ENCODE measurements at regions of chr21 and their contacts with region 1.

Region 1: DNA sequence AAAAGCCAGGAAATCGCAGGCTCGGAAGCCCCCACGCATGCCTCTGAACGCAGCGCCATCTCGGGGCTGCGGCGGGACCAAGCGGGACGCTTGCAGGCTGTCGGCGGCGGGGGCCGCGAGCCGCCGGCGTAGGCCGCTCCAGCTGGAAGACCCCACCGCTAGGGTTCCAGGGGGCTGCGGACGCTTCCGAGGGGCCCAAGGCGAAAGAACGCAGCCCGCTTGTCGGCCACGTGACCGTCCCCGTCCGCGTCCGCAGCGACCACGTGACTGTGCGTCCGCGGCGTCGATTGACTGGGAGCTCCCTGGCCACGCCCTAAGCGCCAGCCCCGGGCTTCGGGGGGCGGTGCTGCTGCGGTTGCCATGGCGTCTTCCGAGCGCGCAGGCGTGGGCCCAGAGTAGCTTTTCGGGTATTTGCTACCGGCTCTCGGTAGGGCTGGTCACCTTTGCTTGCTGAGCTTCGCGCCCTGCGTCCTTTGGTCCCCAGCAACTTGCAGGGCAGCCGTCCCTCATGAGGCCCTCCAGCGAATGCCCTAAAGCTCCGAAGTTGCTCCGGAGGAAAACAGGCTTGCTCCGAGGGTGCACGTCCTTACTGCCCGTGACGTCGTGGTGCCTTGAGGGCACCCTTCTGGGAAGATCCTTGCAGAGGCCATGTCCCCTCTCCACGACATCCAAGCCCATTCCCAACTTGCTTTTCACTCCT is 197.2 kb downstream of the DYRK1A start:
- DNase-seq: peak; percentile 86 to 94 (median 91)
- ATAC-seq: peak; percentile 93
- H3K4me3 ChIP-seq: peak overlapping the region; percentile 99
- H3K4me3 Mint-ChIP-seq: peak overlapping the region; percentile 93 to 100 (median 97)
- H3K27ac ChIP-seq: peak overlapping the region; percentile 82
- H3K27ac Mint-ChIP-seq: peak overlapping the region; percentile 97 to 100 (median 99)
- H3K4me1 ChIP-seq: peaks cover 11 to 17% of the 10 kb centered on the region in 2 donors
- H3K4me1 Mint-ChIP-seq: peaks cover 0 to 32% (median 17%) of the 10 kb centered on the region in 7 donors
- H3K27me3 ChIP-seq: no peaks in the 10 kb centered on the region
- H3K27me3 Mint-ChIP-seq: peaks cover 0 to 8% (median 2%) of the 10 kb centered on the region in 5 donors

Region 2: GRCh38 chr21:36156339-36156814 is 1407.4 kb before region 1 on chr21:
- CTCF ChIA-PET with region 1: no interaction called
- POLR2A ChIA-PET with region 1: no interaction called
- intact Hi-C with region 1: loop called in 1 of 2 experiments (anchors 5 kb)
- DNase-seq: peak; percentile 99 to 100 (median 100)
- ATAC-seq: peak; percentile 94
- H3K4me3 ChIP-seq: peak overlapping the region; percentile 81
- H3K4me3 Mint-ChIP-seq: peak overlapping the region; percentile 71 to 91 (median 86)
- H3K27ac ChIP-seq: peak overlapping the region; percentile 81
- H3K27ac Mint-ChIP-seq: peak overlapping the region in 8 of 9 donors; percentile 46 to 88 (median 58)
- H3K4me1 ChIP-seq: peaks cover 11% of the 10 kb centered on the region in 2 donors
- H3K4me1 Mint-ChIP-seq: peaks cover 11 to 45% (median 33%) of the 10 kb centered on the region in 7 donors
- H3K27me3 ChIP-seq: no peaks in the 10 kb centered on the region
- H3K27me3 Mint-ChIP-seq: peaks cover 0 to 13% (median 0%) of the 10 kb centered on the region in 5 donors

Region 3: GRCh38 chr21:37220981-37221664 is 342.7 kb before region 1 on chr21:
- CTCF ChIA-PET with region 1: interaction called, 5 read pairs
- POLR2A ChIA-PET with region 1: interaction called, 6 read pairs
- intact Hi-C with region 1: loop called in 1 of 2 experiments (anchors 1 kb)
- DNase-seq: peak; percentile 76 to 95 (median 88)
- ATAC-seq: peak; percentile 90
- H3K4me3 ChIP-seq: peak overlapping the region; percentile 83
- H3K4me3 Mint-ChIP-seq: peak overlapping the region; percentile 85 to 95 (median 92)
- H3K27ac ChIP-seq: peak overlapping the region; percentile 81
- H3K27ac Mint-ChIP-seq: peak overlapping the region; percentile 85 to 95 (median 91)
- H3K4me1 ChIP-seq: peaks cover 25 to 33% of the 10 kb centered on the region in 2 donors
- H3K4me1 Mint-ChIP-seq: peaks cover 17 to 65% (median 56%) of the 10 kb centered on the region in 7 donors
- H3K27me3 ChIP-seq: no peaks in the 10 kb centered on the region
- H3K27me3 Mint-ChIP-seq: no peaks in the 10 kb centered on the region

Region 4: GRCh38 chr21:37496972-37497371 is 66.8 kb before region 1 on chr21:
- CTCF ChIA-PET with region 1: no interaction called
- POLR2A ChIA-PET with region 1: no interaction called
- intact Hi-C with region 1: loop called in 1 of 2 experiments (anchors 5 kb)
- DNase-seq: peak in 1 of 9 donors; percentile 10
- ATAC-seq: no peak
- H3K4me3 ChIP-seq: no peak overlapping the region
- H3K4me3 Mint-ChIP-seq: no peak overlapping the region
- H3K27ac ChIP-seq: no peak overlapping the region
- H3K27ac Mint-ChIP-seq: peak overlapping the region in 3 of 9 donors; percentile 8 to 71 (median 36)
- H3K4me1 ChIP-seq: no peaks in the 10 kb centered on the region
- H3K4me1 Mint-ChIP-seq: peaks cover 7 to 57% (median 29%) of the 10 kb centered on the region in 7 donors
- H3K27me3 ChIP-seq: no peaks in the 10 kb centered on the region
- H3K27me3 Mint-ChIP-seq: no peaks in the 10 kb centered on the region

Region 5: GRCh38 chr21:37675202-37675801 is 111.5 kb after region 1 on chr21:
- CTCF ChIA-PET with region 1: interaction called, 4 read pairs
- POLR2A ChIA-PET with region 1: no interaction called
- intact Hi-C with region 1: loop called in 1 of 2 experiments (anchors 2 kb)
- DNase-seq: peak; percentile 20 to 66 (median 38)
- ATAC-seq: peak; percentile 67
- H3K4me3 ChIP-seq: no peak overlapping the region
- H3K4me3 Mint-ChIP-seq: no peak overlapping the region
- H3K27ac ChIP-seq: no peak overlapping the region
- H3K27ac Mint-ChIP-seq: peak overlapping the region in 1 of 9 donors; percentile 70
- H3K4me1 ChIP-seq: no peaks in the 10 kb centered on the region
- H3K4me1 Mint-ChIP-seq: peaks cover 0 to 2% (median 0%) of the 10 kb centered on the region in 7 donors
- H3K27me3 ChIP-seq: no peaks in the 10 kb centered on the region
- H3K27me3 Mint-ChIP-seq: peaks cover 18 to 50% (median 29%) of the 10 kb centered on the region in 5 donors

Region 6: GRCh38 chr21:38805328-38806152 is 1241.7 kb after region 1 on chr21 and contains the start of gene ETS2:
- CTCF ChIA-PET with region 1: no interaction called
- POLR2A ChIA-PET with region 1: no interaction called
- intact Hi-C with region 1: loop called in 1 of 2 experiments (anchors 5 kb)
- DNase-seq: peak; percentile 40 to 79 (median 62)
- ATAC-seq: peak; percentile 85
- H3K4me3 ChIP-seq: peak within 1 kb of the TSS; percentile 81
- H3K4me3 Mint-ChIP-seq: peak within 1 kb of the TSS; percentile 85 to 97 (median 92)
- H3K27ac ChIP-seq: peak within 1 kb of the TSS; percentile 70
- H3K27ac Mint-ChIP-seq: peak within 1 kb of the TSS; percentile 76 to 95 (median 86)
- H3K4me1 ChIP-seq: peaks cover 3 to 9% of the 10 kb centered on the region in 2 donors
- H3K4me1 Mint-ChIP-seq: peaks cover 12 to 39% (median 30%) of the 10 kb centered on the region in 7 donors
- H3K27me3 ChIP-seq: no peaks in the 10 kb centered on the region
- H3K27me3 Mint-ChIP-seq: peaks cover 0 to 4% (median 0%) of the 10 kb centered on the region in 5 donors
- total RNA-seq, gene ETS2: 15.6 to 61.1 (median 20.9) TPM